ENCODE measurements at regions of chr15 and their contacts with region 1.

Region 1: GRCh38 chr15:83631534-83631933 is 22.4 kb upstream of the ADAMTSL3 start:
- DNase-seq: no peak
- H3K4me3 ChIP-seq: no peak overlapping the region
- H3K27ac ChIP-seq: no peak overlapping the region
- H3K4me1 ChIP-seq: no peaks in the 10 kb centered on the region
- H3K27me3 ChIP-seq: no peaks in the 10 kb centered on the region
- CTCF ChIP-seq: no peak
- EP300 ChIP-seq: no peak
- POLR2A ChIP-seq: no peak

Region 2: DNA sequence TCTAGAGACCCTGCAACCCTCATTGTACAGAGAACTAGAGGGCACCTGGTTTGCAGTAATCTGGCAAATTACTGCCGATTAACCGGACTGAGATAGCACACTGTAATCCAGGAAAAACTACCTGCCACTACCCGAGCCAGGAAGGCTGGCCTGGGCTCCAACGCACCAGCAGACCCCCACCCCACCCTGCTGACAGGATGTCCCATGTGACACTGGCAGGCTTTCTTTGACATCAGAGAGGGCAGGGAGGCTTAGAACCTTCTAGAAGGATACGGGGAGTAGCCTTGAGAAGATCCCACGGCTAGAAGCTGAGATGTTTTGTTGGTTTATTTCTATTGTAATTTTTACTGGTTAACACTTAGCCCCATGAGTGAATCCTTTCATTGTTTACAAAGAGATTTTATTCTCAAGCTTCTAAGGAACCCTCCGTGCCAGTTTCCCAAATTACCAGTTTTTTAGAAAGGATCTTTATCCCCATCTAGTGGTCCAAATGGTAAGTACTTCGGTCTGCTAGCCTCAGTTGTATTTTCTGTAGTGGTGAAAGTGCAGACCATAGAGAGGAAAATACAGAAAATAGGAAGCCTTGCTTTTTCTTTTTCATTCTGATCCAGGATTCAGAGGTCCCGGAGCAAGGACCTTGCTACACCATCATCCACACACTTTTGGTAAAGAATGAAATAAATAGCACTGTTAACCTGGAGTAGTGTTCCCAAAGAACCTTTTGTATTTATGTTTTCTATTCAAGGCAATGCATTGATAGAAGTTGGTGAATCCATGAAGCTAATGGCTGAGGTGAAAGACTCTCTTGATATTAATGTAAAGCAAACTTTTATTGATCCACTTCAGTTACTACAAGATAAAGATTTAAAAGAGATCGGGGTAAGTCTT is 59.5 kb before region 1 on chr15:
- in situ Hi-C with region 1: loop called in 1 of 4 experiments (anchors 10 kb)
- intact Hi-C with region 1: no loop called
- DNase-seq: no peak
- H3K4me3 ChIP-seq: no peak overlapping the region
- H3K27ac ChIP-seq: no peak overlapping the region
- H3K4me1 ChIP-seq: no peaks in the 10 kb centered on the region
- H3K27me3 ChIP-seq: no peaks in the 10 kb centered on the region
- CTCF ChIP-seq: peak in 4 of 5 experiments; percentile 25 to 48 (median 43)
- EP300 ChIP-seq: no peak
- POLR2A ChIP-seq: no peak

Measured in transverse colon (tissue), 4 donors.